Activated naive CD4-positive, alpha-beta T cell treated with anti-CD3 and anti-CD28 coated beads for 36 hours (primary cell): ENCODE measurements at regions of chr19 and their contacts with region 1.

Region 1: DNA sequence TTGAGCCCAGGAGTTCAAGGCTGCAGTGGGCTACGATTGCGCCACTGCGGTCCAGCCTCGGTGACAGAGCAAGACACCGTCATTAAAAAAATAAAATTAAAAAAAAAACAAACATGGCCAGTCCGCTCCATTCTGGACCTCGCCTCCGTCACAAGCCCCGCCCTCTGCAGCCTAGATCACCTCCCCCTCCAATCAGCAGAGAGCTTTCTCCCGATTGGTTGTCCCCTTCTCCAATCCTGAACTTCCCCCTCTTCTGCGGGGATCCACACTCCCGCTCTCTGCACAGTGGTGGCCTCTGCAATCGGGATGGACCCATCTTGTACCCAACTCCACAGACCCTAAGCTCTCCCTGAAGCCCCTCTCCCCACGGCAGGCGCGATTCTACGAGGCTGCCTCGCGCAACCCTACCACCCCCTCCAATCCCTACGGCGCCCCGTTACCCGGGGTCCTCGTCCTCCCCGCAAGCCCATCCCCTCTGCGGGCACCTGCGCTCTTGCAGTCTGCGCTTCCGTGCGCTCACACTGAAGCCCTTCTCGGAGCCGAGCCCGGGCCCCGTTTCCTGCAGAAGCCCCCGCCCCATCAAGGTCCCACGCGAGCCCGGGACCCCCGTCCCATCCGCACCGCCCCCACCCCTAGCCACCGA is 540 bp downstream of the TMEM160 start:
- DNase-seq: peak; percentile 91
- H3K4me3 Mint-ChIP-seq: peak overlapping the region; percentile 98
- H3K27ac Mint-ChIP-seq: peak overlapping the region; percentile 84
- H3K4me1 Mint-ChIP-seq: peaks cover 13% of the 10 kb centered on the region
- H3K27me3 Mint-ChIP-seq: no peaks in the 10 kb centered on the region

Region 2: GRCh38 chr19:46850228-46851203 is 197.4 kb before region 1 on chr19 and contains the start of gene AP2S1:
- CTCF ChIA-PET with region 1: no interaction called
- intact Hi-C with region 1: loop called (anchors 1 kb)
- DNase-seq: peak; percentile 96
- H3K4me3 Mint-ChIP-seq: peak within 1 kb of the TSS; percentile 90
- H3K27ac Mint-ChIP-seq: peak within 1 kb of the TSS; percentile 74
- H3K4me1 Mint-ChIP-seq: peaks cover 15% of the 10 kb centered on the region
- H3K27me3 Mint-ChIP-seq: no peaks in the 10 kb centered on the region
- total RNA-seq, gene AP2S1: 112 to 118 TPM